Body of pancreas (tissue), 4 donors: ENCODE measurements at regions of chr11 and their contacts with region 1.

Region 1: DNA sequence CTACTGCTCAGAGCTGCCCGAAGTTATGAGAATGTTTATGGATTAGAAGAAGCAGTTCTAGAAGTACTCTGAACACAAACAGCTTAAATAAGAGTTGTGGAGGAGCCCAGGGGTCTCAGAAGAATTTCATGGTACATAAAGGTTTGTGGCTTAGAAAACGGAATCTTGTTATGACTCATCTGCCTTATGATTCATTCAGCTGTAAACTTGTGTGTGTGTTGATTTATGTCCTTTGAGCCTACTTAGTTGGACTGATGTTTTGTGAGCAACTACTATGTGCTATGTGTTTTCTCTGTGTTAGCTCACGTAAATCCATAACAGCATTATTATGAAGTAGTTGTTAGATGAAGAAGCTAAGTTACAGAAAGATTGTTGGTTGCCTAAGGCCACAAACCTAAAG is 203.7 kb downstream of the PGR start:
- DNase-seq: no peak
- ATAC-seq: no peak
- H3K4me3 ChIP-seq: no peak overlapping the region
- H3K27ac ChIP-seq: no peak overlapping the region
- H3K4me1 ChIP-seq: no peaks in the 10 kb centered on the region
- H3K27me3 ChIP-seq: no peaks in the 10 kb centered on the region
- CTCF ChIP-seq: no peak
- POLR2A ChIP-seq: no peak

Region 2: GRCh38 chr11:100581318-100581717 is 344.6 kb before region 1 on chr11:
- intact Hi-C with region 1: loop called (anchors 10 kb)
- DNase-seq: peak in 1 of 4 donors; percentile 22
- ATAC-seq: peak; percentile 42
- H3K4me3 ChIP-seq: no peak overlapping the region
- H3K27ac ChIP-seq: no peak overlapping the region
- H3K4me1 ChIP-seq: no peaks in the 10 kb centered on the region
- H3K27me3 ChIP-seq: no peaks in the 10 kb centered on the region
- CTCF ChIP-seq: no peak
- POLR2A ChIP-seq: no peak